WTC11 (cell line): ENCODE measurements at regions of chr12 and their contacts with region 1.

Region 1: GRCh38 chr12:27305673-27306456 is 26.8 kb upstream of the BMAL2 start:
- DNase-seq: no peak
- ATAC-seq: no peak
- H3K4me3 Mint-ChIP-seq: no peak overlapping the region
- H3K27ac Mint-ChIP-seq: peak overlapping the region; percentile 55; the same call in 1 of the 2 replicates
- H3K4me1 Mint-ChIP-seq: no peaks in the 10 kb centered on the region
- H3K27me3 Mint-ChIP-seq: no peaks in the 10 kb centered on the region
- CTCF ChIP-seq: no peak

Region 2: GRCh38 chr12:27014085-27014858 is 291.6 kb before region 1 on chr12 and contains the start of gene TM7SF3:
- CTCF ChIA-PET with region 1: interaction called, 57 read pairs
- POLR2A ChIA-PET with region 1: no interaction called
- DNase-seq: peak; percentile 95
- ATAC-seq: peak; percentile 90
- H3K4me3 Mint-ChIP-seq: peak within 1 kb of the TSS; percentile 92
- H3K27ac Mint-ChIP-seq: peak within 1 kb of the TSS; percentile 88
- H3K4me1 Mint-ChIP-seq: peaks cover 45% of the 10 kb centered on the region
- H3K27me3 Mint-ChIP-seq: no peaks in the 10 kb centered on the region
- CTCF ChIP-seq: peak; percentile 77
- total RNA-seq, gene TM7SF3: 75.3 to 80.9 TPM (median 75.7 TPM) in 3 replicates

Region 3: GRCh38 chr12:27221625-27222387 is 84.1 kb before region 1 on chr12:
- CTCF ChIA-PET with region 1: interaction called, 10 read pairs
- POLR2A ChIA-PET with region 1: no interaction called
- DNase-seq: no peak
- ATAC-seq: no peak
- H3K4me3 Mint-ChIP-seq: no peak overlapping the region
- H3K27ac Mint-ChIP-seq: no peak overlapping the region
- H3K4me1 Mint-ChIP-seq: peaks cover 5% of the 10 kb centered on the region
- H3K27me3 Mint-ChIP-seq: no peaks in the 10 kb centered on the region; the same call in 1 of the 2 replicates
- CTCF ChIP-seq: no peak

Region 4: DNA sequence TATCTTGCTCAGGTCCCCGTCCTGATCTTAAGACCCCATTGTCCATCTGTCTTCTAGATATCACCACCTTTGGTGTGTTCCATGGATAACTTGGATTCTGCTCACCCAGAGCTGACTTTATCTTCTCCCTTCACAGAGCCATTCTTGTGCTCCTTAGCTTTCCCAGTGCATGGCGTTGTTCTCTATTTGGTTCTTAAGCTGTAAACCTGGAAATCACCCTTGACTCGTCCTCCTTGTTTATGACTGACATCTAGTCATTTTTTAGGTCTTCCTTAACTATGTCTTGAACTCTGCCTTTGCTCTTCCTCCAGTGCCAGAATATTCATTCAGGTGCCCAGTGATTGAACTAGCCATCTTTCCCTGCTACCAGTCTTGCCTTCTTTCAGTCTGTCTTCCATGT is 50.1 kb before region 1 on chr12:
- CTCF ChIA-PET with region 1: interaction called, 12 read pairs
- POLR2A ChIA-PET with region 1: no interaction called
- DNase-seq: no peak
- ATAC-seq: no peak
- H3K4me3 Mint-ChIP-seq: no peak overlapping the region
- H3K27ac Mint-ChIP-seq: no peak overlapping the region
- H3K4me1 Mint-ChIP-seq: peaks cover 12% of the 10 kb centered on the region
- H3K27me3 Mint-ChIP-seq: no peaks in the 10 kb centered on the region
- CTCF ChIP-seq: no peak

Region 5: GRCh38 chr12:27319409-27319808 is 13.5 kb after region 1 on chr12:
- CTCF ChIA-PET with region 1: interaction called, 24 read pairs
- POLR2A ChIA-PET with region 1: no interaction called
- DNase-seq: no peak
- ATAC-seq: no peak; the same call in 1 of the 2 replicates
- H3K4me3 Mint-ChIP-seq: no peak overlapping the region
- H3K27ac Mint-ChIP-seq: peak overlapping the region; percentile 80
- H3K4me1 Mint-ChIP-seq: peaks cover 11% of the 10 kb centered on the region
- H3K27me3 Mint-ChIP-seq: no peaks in the 10 kb centered on the region
- CTCF ChIP-seq: no peak

Region 6: GRCh38 chr12:27521066-27521465 is 215.2 kb after region 1 on chr12:
- CTCF ChIA-PET with region 1: no interaction called
- POLR2A ChIA-PET with region 1: no interaction called
- DNase-seq: peak; percentile 27
- ATAC-seq: peak; percentile 4
- H3K4me3 Mint-ChIP-seq: 0 out of 2 replicates have a peak overlapping the region, but pooled peaks have one; percentile 5
- H3K27ac Mint-ChIP-seq: no peak overlapping the region
- H3K4me1 Mint-ChIP-seq: peaks cover 41% of the 10 kb centered on the region
- H3K27me3 Mint-ChIP-seq: peaks cover 34% of the 10 kb centered on the region
- CTCF ChIP-seq: no peak